ENCODE measurements at regions of chr15 and their contacts with region 1.

Region 1: GRCh38 chr15:94526071-94526689 is 294.8 kb downstream of the MCTP2 start:
- DNase-seq: no peak
- H3K4me3 ChIP-seq: no peak overlapping the region
- H3K27ac ChIP-seq: no peak overlapping the region
- H3K4me1 ChIP-seq: peaks cover 0 to 4% (median 0%) of the 10 kb centered on the region in 4 experiments; a peak in 1 of 7 replicates
- H3K27me3 ChIP-seq: no peaks in the 10 kb centered on the region
- CTCF ChIP-seq: peak; percentile 15 to 49 (median 35); a peak in 3 of 4 replicates
- EP300 ChIP-seq: no peak
- POLR2A ChIP-seq: no peak
- RAD21 ChIP-seq: peak in 1 of 2 experiments; percentile 24; a peak in 2 of 4 replicates

Region 2: GRCh38 chr15:94493176-94493575 is 33.0 kb before region 1 on chr15:
- CTCF ChIA-PET with region 1: no interaction called
- POLR2A ChIA-PET with region 1: no interaction called
- DNase-seq: no peak
- H3K4me3 ChIP-seq: no peak overlapping the region
- H3K27ac ChIP-seq: no peak overlapping the region
- H3K4me1 ChIP-seq: no peaks in the 10 kb centered on the region
- H3K27me3 ChIP-seq: no peaks in the 10 kb centered on the region
- CTCF ChIP-seq: no peak
- EP300 ChIP-seq: no peak
- POLR2A ChIP-seq: no peak
- RAD21 ChIP-seq: no peak

Region 3: GRCh38 chr15:94509259-94509658 is 16.9 kb before region 1 on chr15:
- CTCF ChIA-PET with region 1: interaction called, 22 read pairs
- POLR2A ChIA-PET with region 1: no interaction called
- DNase-seq: no peak
- H3K4me3 ChIP-seq: no peak overlapping the region
- H3K27ac ChIP-seq: no peak overlapping the region
- H3K4me1 ChIP-seq: no peaks in the 10 kb centered on the region
- H3K27me3 ChIP-seq: no peaks in the 10 kb centered on the region
- CTCF ChIP-seq: no peak
- EP300 ChIP-seq: no peak
- POLR2A ChIP-seq: no peak
- RAD21 ChIP-seq: no peak

Region 4: DNA sequence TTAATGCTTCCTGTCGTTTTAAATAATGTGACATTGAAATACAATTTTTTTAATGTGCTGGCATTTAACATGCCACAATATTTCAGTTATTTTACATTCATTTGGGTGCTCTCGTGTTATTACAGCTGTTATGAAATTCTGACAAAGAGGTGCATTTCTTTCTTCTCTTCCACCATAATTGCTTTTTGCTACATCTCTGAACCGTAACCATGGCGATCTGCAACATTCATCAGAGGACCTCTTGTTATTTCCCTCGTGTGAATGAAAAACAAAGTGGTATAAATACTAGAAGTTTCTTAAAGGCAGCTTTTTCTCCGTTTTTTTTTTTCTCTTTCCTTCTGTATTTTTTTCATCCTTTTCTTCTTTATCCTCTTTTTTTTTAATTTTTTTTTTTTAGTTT is 21.5 kb after region 1 on chr15:
- CTCF ChIA-PET with region 1: interaction called, 46 read pairs
- POLR2A ChIA-PET with region 1: no interaction called
- DNase-seq: no peak
- H3K4me3 ChIP-seq: no peak overlapping the region
- H3K27ac ChIP-seq: no peak overlapping the region
- H3K4me1 ChIP-seq: no peaks in the 10 kb centered on the region
- H3K27me3 ChIP-seq: no peaks in the 10 kb centered on the region
- CTCF ChIP-seq: no peak
- EP300 ChIP-seq: no peak
- POLR2A ChIP-seq: no peak
- RAD21 ChIP-seq: no peak

Measured in H1 (cell line).